CD4-positive, alpha-beta memory T cell (primary cell): ENCODE measurements at regions of chr1 and their contacts with region 1.

Region 1: DNA sequence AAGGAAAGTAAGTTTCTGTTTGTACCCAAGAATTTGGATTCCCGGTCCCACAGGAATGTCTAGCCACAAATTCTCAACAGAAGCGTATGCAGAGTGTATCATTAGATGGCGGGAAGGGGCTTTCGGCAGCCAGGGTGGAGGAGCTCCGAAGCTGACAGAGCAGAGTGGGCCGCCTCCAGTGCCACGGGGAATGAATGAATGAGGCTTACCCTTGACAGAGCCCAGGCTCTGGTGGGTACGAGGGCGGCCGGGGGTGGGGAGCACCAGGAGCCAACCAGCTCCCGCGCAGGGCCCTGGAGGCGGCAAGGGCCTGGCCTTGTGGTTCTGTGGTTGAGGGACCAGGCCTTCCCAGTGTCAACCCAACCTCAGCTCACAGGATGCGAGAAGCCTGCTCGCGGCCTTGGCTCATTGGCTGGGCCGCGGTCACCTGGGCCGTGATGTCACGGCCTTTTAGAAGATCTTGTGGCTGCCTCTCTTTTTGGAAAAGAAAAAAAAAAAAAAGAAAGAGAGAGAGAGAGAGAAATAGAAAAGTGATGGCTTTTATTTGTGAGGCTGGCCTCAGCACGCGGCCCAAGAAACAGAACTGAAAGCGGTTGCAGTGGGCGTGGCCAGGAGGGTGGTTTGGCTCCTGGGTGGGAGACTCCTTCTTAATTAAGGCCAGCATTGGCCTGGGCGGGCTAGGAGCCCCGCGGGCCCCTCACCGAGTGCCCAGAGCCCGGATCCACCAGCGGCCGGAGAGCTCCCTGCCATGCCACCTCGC is 34.9 kb upstream of the RUNX3 start:
- DNase-seq: peak; percentile 90 to 95 (median 93)
- H3K4me3 ChIP-seq: peak overlapping the region; percentile 46 to 69
- H3K4me3 Mint-ChIP-seq: peak overlapping the region; percentile 69 to 91 (median 84)
- H3K27ac ChIP-seq: peak overlapping the region; percentile 69
- H3K27ac Mint-ChIP-seq: peak overlapping the region; percentile 89 to 100 (median 96)
- H3K4me1 ChIP-seq: peaks cover 45% of the 10 kb centered on the region
- H3K4me1 Mint-ChIP-seq: peaks cover 16 to 73% (median 39%) of the 10 kb centered on the region in 4 donors
- H3K27me3 ChIP-seq: no peaks in the 10 kb centered on the region
- H3K27me3 Mint-ChIP-seq: peaks cover 0 to 2% of the 10 kb centered on the region in 2 donors

Region 2: DNA sequence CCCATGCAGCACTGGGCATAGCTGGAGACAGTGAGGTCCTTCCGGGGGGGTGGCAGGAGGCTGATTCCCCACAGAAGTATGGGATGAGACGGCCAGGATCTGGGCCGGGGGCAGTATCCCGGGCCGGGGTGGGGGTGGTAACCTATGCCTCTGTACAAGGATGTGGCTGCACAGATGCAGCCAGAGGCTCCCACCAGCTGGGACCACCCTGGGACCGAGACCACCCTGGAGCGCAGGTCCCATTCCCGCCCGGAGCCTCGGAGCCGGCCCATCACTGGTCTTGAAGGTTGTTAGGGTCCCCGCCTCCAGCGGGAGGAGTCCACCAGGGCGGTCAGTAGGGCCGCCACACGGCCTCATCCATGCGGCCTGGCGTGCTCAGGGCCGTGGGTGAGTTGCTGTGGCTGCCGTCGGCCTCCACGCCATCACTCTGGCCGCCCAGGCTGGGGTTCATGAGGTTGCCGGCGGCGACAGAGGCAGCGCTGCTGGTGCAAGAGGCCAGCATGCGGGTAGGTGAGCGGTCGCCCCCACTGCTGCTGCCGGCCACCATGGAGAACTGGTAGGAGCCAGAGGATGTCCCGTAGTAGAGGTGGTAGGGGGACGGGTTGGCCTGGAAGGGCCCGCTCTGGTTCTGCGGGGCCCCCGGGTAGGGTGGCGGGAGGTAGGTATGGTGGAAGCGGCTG is 63.1 kb before region 1 on chr1:
- CTCF ChIA-PET with region 1: no interaction called
- POLR2A ChIA-PET with region 1: no interaction called
- intact Hi-C with region 1: no loop called
- DNase-seq: no peak
- H3K4me3 ChIP-seq: no peak overlapping the region
- H3K4me3 Mint-ChIP-seq: peak overlapping the region in 1 of 8 donors; percentile 17
- H3K27ac ChIP-seq: no peak overlapping the region
- H3K27ac Mint-ChIP-seq: peak overlapping the region in 4 of 7 donors; percentile 57 to 85 (median 74)
- H3K4me1 ChIP-seq: peaks cover 21% of the 10 kb centered on the region
- H3K4me1 Mint-ChIP-seq: peaks cover 11 to 43% (median 30%) of the 10 kb centered on the region in 4 donors
- H3K27me3 ChIP-seq: no peaks in the 10 kb centered on the region
- H3K27me3 Mint-ChIP-seq: no peaks in the 10 kb centered on the region

Region 3: GRCh38 chr1:24987875-24988557 is 23.0 kb after region 1 on chr1:
- CTCF ChIA-PET with region 1: interaction called, 12 read pairs
- POLR2A ChIA-PET with region 1: interaction called, 35 read pairs
- intact Hi-C with region 1: no loop called
- DNase-seq: no peak
- H3K4me3 ChIP-seq: no peak overlapping the region
- H3K4me3 Mint-ChIP-seq: peak overlapping the region in 1 of 8 donors; percentile 36
- H3K27ac ChIP-seq: no peak overlapping the region
- H3K27ac Mint-ChIP-seq: peak overlapping the region in 4 of 7 donors; percentile 31 to 89 (median 60)
- H3K4me1 ChIP-seq: peaks cover 90% of the 10 kb centered on the region
- H3K4me1 Mint-ChIP-seq: peaks cover 65 to 91% (median 77%) of the 10 kb centered on the region in 4 donors
- H3K27me3 ChIP-seq: no peaks in the 10 kb centered on the region
- H3K27me3 Mint-ChIP-seq: peaks cover 0 to 2% of the 10 kb centered on the region in 2 donors